Activated CD8-positive, alpha-beta T cell treated with anti-CD3 and anti-CD28 coated beads, Interleukin-2, amount 10 ng/mL, durations not matched to agents 7 days and 5 days (primary cell): ENCODE measurements at regions of chr3 and their contacts with region 1.

Region 1: GRCh38 chr3:112333002-112333380 is at the start of gene CD200:
- DNase-seq: peak; percentile 49
- ATAC-seq: peak; percentile 87
- H3K4me3 Mint-ChIP-seq: peak within 1 kb of the TSS; percentile 84
- H3K27ac Mint-ChIP-seq: peak within 1 kb of the TSS; percentile 78
- H3K4me1 Mint-ChIP-seq: peaks cover 32% of the 10 kb centered on the region
- H3K27me3 Mint-ChIP-seq: no peaks in the 10 kb centered on the region
- total RNA-seq, gene CD200: 0.86 to 1.4 TPM

Region 2: GRCh38 chr3:112136959-112137693 is 195.9 kb before region 1 on chr3:
- CTCF ChIA-PET with region 1: interaction called, 15 read pairs
- POLR2A ChIA-PET with region 1: no interaction called
- DNase-seq: peak; percentile 67
- ATAC-seq: no peak
- H3K4me3 Mint-ChIP-seq: no peak overlapping the region
- H3K27ac Mint-ChIP-seq: no peak overlapping the region
- H3K4me1 Mint-ChIP-seq: peaks cover 36% of the 10 kb centered on the region
- H3K27me3 Mint-ChIP-seq: no peaks in the 10 kb centered on the region

Region 3: GRCh38 chr3:112303764-112304325 is 29.1 kb before region 1 on chr3:
- CTCF ChIA-PET with region 1: interaction called, 13 read pairs
- POLR2A ChIA-PET with region 1: interaction called, 3 read pairs
- DNase-seq: no peak
- ATAC-seq: peak; percentile 57
- H3K4me3 Mint-ChIP-seq: no peak overlapping the region
- H3K27ac Mint-ChIP-seq: no peak overlapping the region
- H3K4me1 Mint-ChIP-seq: peaks cover 1% of the 10 kb centered on the region
- H3K27me3 Mint-ChIP-seq: no peaks in the 10 kb centered on the region

Region 4: GRCh38 chr3:112399064-112399463 is 66.1 kb after region 1 on chr3:
- CTCF ChIA-PET with region 1: no interaction called
- POLR2A ChIA-PET with region 1: no interaction called
- DNase-seq: no peak
- ATAC-seq: no peak
- H3K4me3 Mint-ChIP-seq: no peak overlapping the region
- H3K27ac Mint-ChIP-seq: no peak overlapping the region
- H3K4me1 Mint-ChIP-seq: peaks cover 12% of the 10 kb centered on the region
- H3K27me3 Mint-ChIP-seq: no peaks in the 10 kb centered on the region

Region 5: GRCh38 chr3:112437146-112438022 is 104.4 kb after region 1 on chr3:
- CTCF ChIA-PET with region 1: interaction called, 11 read pairs
- POLR2A ChIA-PET with region 1: no interaction called
- DNase-seq: peak; percentile 29
- ATAC-seq: peak; percentile 90
- H3K4me3 Mint-ChIP-seq: no peak overlapping the region
- H3K27ac Mint-ChIP-seq: peak overlapping the region; percentile 47
- H3K4me1 Mint-ChIP-seq: peaks cover 18% of the 10 kb centered on the region
- H3K27me3 Mint-ChIP-seq: no peaks in the 10 kb centered on the region

Region 6: DNA sequence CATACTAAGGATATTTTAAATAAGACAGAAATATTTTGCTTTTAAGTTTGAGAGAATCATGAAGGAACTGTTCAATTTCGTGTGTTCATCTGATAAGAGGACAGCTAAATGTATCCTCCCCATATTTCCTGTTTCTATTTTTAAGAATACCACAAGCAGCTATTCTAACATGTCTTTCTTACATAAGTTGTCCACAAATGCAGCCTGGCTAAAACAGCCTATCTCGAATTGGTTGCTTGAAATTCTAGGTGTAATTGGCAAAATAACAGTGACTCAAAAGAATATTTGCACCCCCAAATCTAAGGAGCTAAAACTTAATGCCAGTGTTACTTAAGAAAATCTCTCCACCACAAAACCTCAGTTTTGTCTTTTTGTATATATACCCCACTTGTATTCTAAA is 131.3 kb after region 1 on chr3:
- CTCF ChIA-PET with region 1: interaction called, 10 read pairs
- POLR2A ChIA-PET with region 1: no interaction called
- DNase-seq: peak; percentile 39
- ATAC-seq: peak; percentile 67
- H3K4me3 Mint-ChIP-seq: peak overlapping the region; percentile 11
- H3K27ac Mint-ChIP-seq: peak overlapping the region; percentile 70
- H3K4me1 Mint-ChIP-seq: peaks cover 87% of the 10 kb centered on the region
- H3K27me3 Mint-ChIP-seq: no peaks in the 10 kb centered on the region

Region 7: DNA sequence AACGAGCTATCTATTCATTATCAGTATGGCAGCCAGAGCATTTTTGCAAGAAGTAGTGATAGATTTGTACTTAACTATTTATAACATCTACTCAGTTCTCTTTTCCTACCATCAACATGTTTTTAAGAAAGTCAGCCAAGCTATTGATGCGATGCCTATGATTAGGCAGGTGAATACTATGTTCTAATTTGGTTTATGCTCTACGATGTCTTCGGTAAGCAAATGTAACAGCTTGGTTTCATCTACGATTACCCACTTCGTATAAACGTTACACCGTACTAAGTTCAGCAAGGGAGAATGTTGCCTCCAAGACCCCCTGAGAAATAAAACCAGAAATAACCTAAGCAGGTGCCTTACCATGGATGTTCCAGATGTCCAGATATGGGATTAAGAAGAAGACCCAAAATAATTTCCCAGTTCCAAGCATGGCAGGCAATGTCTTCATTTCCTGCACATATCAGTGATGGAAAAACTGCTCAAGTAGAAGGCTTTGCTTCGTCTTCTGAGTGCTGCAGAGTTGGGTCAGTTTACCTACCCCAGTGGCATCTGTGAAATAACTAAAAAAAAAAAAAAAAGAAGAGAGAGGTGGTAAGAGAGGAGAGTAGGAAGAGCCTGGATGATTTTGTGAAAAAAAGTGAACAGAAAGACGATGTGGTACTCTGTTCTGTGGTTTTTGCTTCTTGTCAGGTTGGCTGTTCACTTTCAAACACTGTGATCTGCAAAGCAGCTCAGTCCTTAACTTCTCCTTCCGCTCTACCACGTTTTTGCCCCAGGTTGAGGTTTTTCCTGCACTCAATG is 166.1 kb after region 1 on chr3 and contains the start of gene BTLA:
- CTCF ChIA-PET with region 1: interaction called, 15 read pairs
- POLR2A ChIA-PET with region 1: interaction called, 6 read pairs
- DNase-seq: peak; percentile 63
- ATAC-seq: peak; percentile 72
- H3K4me3 Mint-ChIP-seq: peak within 1 kb of the TSS; percentile 97
- H3K27ac Mint-ChIP-seq: peak within 1 kb of the TSS; percentile 95
- H3K4me1 Mint-ChIP-seq: peaks cover 44% of the 10 kb centered on the region
- H3K27me3 Mint-ChIP-seq: no peaks in the 10 kb centered on the region
- total RNA-seq, gene BTLA: 22.3 to 26.0 TPM

Region 8: DNA sequence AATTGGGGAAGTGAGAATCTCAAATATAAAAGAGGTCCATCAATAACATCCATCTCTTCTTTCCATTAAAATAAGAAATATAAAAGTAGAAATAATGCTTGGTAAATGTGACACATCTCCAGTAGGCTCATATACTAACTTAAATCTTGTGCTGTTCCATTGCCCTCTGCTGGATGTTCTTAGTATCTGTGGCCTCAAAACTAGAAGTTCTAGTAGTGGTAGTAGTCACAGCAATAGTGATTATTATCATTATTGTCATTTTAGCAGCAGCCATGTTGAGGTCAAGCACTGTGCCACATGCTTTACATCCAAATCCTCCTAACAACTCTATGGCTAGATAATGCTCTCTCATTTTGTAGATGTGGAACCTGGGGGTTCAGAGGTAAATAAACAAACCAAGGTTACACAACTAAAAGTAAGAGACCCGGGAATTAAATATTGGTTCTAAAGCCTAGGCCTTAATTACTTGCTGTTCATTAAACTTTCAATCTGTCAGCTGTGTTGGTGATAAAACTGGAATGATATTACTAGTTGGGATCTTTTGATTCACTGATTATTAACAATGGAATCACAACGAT is 186.5 kb after region 1 on chr3:
- CTCF ChIA-PET with region 1: interaction called, 24 read pairs
- POLR2A ChIA-PET with region 1: no interaction called
- DNase-seq: peak; percentile 68
- ATAC-seq: peak; percentile 80
- H3K4me3 Mint-ChIP-seq: no peak overlapping the region
- H3K27ac Mint-ChIP-seq: no peak overlapping the region
- H3K4me1 Mint-ChIP-seq: peaks cover 18% of the 10 kb centered on the region
- H3K27me3 Mint-ChIP-seq: no peaks in the 10 kb centered on the region